Heart right ventricle (tissue), 16 donors: ENCODE measurements at regions of chr2 and their contacts with region 1.

Region 1: GRCh38 chr2:102240640-102241370 is 54.0 kb downstream of the IL1RL2 start:
- DNase-seq: peak; percentile 93
- ATAC-seq: peak; percentile 93 to 97 (median 94)
- H3K4me3 ChIP-seq: peak overlapping the region in 5 of 10 donors; percentile 15 to 35 (median 19)
- H3K27ac ChIP-seq: peak overlapping the region; percentile 59 to 91 (median 78)
- H3K4me1 ChIP-seq: peaks cover 0 to 41% (median 20%) of the 10 kb centered on the region in 9 donors
- H3K27me3 ChIP-seq: peaks cover 0 to 17% (median 0%) of the 10 kb centered on the region in 7 donors
- CTCF ChIP-seq: peak; percentile 96 to 100 (median 99)

Region 2: GRCh38 chr2:101883863-101884262 is 356.9 kb before region 1 on chr2:
- intact Hi-C with region 1: loop called in 5 of 10 experiments (anchors 5 to 10 kb)
- DNase-seq: no peak
- ATAC-seq: peak; percentile 29 to 82 (median 62)
- H3K4me3 ChIP-seq: no peak overlapping the region
- H3K27ac ChIP-seq: peak overlapping the region in 1 of 10 donors; percentile 27
- H3K4me1 ChIP-seq: peaks cover 0 to 42% (median 30%) of the 10 kb centered on the region in 9 donors
- H3K27me3 ChIP-seq: no peaks in the 10 kb centered on the region
- CTCF ChIP-seq: peak; percentile 24 to 68 (median 57)

Region 3: DNA sequence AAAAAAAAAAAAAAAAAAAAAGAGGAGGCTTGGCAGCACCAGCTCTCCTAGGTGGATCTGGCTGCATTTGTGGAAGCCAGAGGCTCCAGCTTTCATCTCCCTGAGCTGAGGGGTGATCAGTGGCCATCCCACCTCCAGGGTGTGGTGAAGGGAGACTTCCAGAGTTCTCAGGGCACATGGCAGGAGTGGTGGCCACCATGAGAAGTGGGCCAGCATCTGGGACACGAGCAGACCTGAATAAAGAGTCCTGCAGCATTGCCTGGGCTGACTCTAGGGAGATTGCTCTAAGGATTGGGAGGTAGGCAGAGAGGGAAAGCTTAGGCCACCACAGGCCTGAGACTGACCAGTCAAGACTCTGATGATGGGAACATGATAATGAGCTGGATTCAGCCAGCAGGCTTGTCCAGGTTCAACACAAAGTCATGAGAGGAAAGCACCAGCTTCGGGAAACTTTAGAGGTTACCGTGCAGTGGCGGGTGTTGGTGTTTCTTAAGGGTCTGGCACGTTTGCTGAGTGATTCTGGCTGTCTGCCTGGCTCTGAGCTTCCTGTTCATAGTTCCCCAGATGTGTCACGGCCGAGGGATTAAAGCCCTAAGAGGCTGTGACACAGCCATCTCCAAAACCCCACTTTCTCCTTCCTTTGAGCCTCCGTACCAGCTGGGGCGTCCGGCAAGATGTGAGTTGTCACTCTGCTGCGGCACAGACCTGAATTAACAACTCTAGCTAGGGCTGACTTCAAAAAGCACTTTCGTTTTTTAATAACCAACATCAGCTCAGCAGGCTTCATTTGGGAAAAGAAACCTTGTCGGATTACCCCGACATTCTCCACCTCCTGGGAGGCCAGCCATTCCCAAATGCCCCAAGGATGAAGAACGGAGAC is 136.6 kb before region 1 on chr2:
- intact Hi-C with region 1: no loop called
- DNase-seq: peak; percentile 60 to 75
- ATAC-seq: peak; percentile 57 to 93 (median 76)
- H3K4me3 ChIP-seq: peak overlapping the region in 9 of 10 donors; percentile 24 to 57 (median 43)
- H3K27ac ChIP-seq: peak overlapping the region in 9 of 10 donors; percentile 32 to 85 (median 63)
- H3K4me1 ChIP-seq: peaks cover 0 to 36% (median 17%) of the 10 kb centered on the region in 9 donors
- H3K27me3 ChIP-seq: no peaks in the 10 kb centered on the region
- CTCF ChIP-seq: no peak

Region 4: GRCh38 chr2:102141970-102142828 is 98.6 kb before region 1 on chr2 and contains the start of gene IL1R1:
- intact Hi-C with region 1: no loop called
- DNase-seq: peak; percentile 80 to 88
- ATAC-seq: peak; percentile 87 to 95 (median 92)
- H3K4me3 ChIP-seq: peak within 1 kb of the TSS; percentile 41 to 87 (median 75)
- H3K27ac ChIP-seq: peak within 1 kb of the TSS; percentile 88 to 98 (median 92)
- H3K4me1 ChIP-seq: peaks cover 0 to 45% (median 15%) of the 10 kb centered on the region in 9 donors
- H3K27me3 ChIP-seq: no peaks in the 10 kb centered on the region
- CTCF ChIP-seq: peak in 1 of 9 donors; percentile 17
- total RNA-seq, gene IL1R1: 5.7 to 47.0 (median 17.6) TPM

Region 5: DNA sequence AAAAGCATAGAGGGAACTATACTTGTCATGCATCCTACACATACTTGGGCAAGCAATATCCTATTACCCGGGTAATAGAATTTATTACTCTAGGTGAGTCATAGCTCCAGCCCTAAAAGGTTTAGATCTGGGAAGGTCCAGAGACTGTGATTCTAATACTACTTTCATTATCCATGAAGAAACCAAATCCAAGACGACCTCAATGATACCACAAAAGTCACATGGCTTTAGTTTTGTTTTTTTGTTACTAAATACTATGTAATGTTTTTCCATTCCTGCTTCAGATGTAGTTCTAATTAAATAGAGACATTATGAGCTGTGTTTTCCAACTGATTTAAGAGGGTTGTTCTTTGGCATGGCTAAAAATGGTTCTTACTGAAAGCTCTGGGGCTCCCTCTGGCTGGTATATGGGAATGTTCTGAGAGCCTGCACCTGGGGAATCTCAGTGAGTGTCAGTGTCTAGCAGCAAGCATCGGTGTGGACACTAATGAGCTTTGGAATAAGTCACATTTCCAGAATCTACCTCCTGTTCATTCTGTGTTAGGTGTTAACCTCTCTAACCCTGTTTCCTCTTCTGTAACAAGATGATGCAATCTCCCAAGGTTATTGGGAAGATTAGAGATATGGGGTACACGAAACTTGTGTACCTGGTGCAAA is 74.5 kb before region 1 on chr2:
- intact Hi-C with region 1: loop called in 2 of 10 experiments (anchors 10 kb)
- DNase-seq: peak in 1 of 2 donors; percentile 35
- ATAC-seq: peak; percentile 73 to 95 (median 86)
- H3K4me3 ChIP-seq: no peak overlapping the region
- H3K27ac ChIP-seq: peak overlapping the region in 2 of 10 donors; percentile 5 to 15
- H3K4me1 ChIP-seq: peaks cover 0 to 14% (median 6%) of the 10 kb centered on the region in 9 donors
- H3K27me3 ChIP-seq: no peaks in the 10 kb centered on the region
- CTCF ChIP-seq: peak; percentile 41 to 83 (median 66)

Region 6: GRCh38 chr2:102187496-102188150 is 53.2 kb before region 1 on chr2:
- intact Hi-C with region 1: loop called in 4 of 10 experiments (anchors 2 to 10 kb)
- DNase-seq: peak; percentile 62 to 65
- ATAC-seq: peak; percentile 80 to 93 (median 88)
- H3K4me3 ChIP-seq: peak overlapping the region; percentile 13 to 63 (median 53)
- H3K27ac ChIP-seq: peak overlapping the region in 7 of 10 donors; percentile 44 to 80 (median 68)
- H3K4me1 ChIP-seq: peaks cover 2 to 29% (median 8%) of the 10 kb centered on the region in 9 donors
- H3K27me3 ChIP-seq: peaks cover 0 to 28% (median 3%) of the 10 kb centered on the region in 7 donors
- CTCF ChIP-seq: peak in 7 of 9 donors; percentile 20 to 55 (median 38)

Region 7: DNA sequence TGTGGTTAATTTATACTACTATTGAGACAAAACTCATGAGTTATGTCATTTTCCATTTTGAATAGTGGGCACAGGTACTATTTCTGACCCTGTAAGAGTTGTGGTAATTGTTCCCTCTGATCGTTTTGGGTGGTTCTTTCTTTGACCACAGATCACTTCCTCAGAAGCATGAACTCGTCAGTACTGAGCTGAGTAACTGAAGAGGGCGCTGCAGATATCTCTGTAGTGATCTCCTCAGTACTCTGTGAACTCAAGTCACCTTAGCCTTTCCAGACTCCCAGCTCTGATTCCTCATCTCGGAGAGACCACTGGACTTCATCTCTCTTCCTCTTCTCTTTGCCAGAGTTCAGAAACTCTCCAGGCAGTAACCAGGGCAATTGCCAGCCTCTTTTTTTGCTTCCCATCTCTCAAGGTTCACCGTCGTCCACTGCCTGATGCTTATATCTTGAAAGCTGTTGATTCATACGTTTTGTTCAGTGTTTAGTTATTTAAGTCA is 61.1 kb after region 1 on chr2:
- intact Hi-C with region 1: no loop called
- DNase-seq: peak in 1 of 2 donors; percentile 18
- ATAC-seq: peak; percentile 38 to 74 (median 54)
- H3K4me3 ChIP-seq: no peak overlapping the region
- H3K27ac ChIP-seq: no peak overlapping the region
- H3K4me1 ChIP-seq: peaks cover 0 to 22% (median 0%) of the 10 kb centered on the region in 9 donors
- H3K27me3 ChIP-seq: peaks cover 0 to 85% (median 10%) of the 10 kb centered on the region in 7 donors
- CTCF ChIP-seq: peak in 4 of 9 donors; percentile 28 to 55 (median 37)

Region 8: GRCh38 chr2:102342891-102343290 is 102.1 kb after region 1 on chr2:
- intact Hi-C with region 1: loop called in 1 of 10 experiments (anchors 5 kb)
- DNase-seq: no peak
- ATAC-seq: no peak
- H3K4me3 ChIP-seq: no peak overlapping the region
- H3K27ac ChIP-seq: no peak overlapping the region
- H3K4me1 ChIP-seq: peaks cover 0 to 4% (median 0%) of the 10 kb centered on the region in 9 donors
- H3K27me3 ChIP-seq: peaks cover 0 to 11% (median 0%) of the 10 kb centered on the region in 7 donors
- CTCF ChIP-seq: peak in 4 of 9 donors; percentile 9 to 44 (median 21)

Region 9: GRCh38 chr2:102449370-102449974 is 208.7 kb after region 1 on chr2:
- intact Hi-C with region 1: loop called in 3 of 10 experiments (anchors 5 kb)
- DNase-seq: peak; percentile 13 to 17
- ATAC-seq: no peak
- H3K4me3 ChIP-seq: no peak overlapping the region
- H3K27ac ChIP-seq: no peak overlapping the region
- H3K4me1 ChIP-seq: no peaks in the 10 kb centered on the region
- H3K27me3 ChIP-seq: no peaks in the 10 kb centered on the region
- CTCF ChIP-seq: peak in 8 of 9 donors; percentile 27 to 77 (median 68)